ENCODE measurements at regions of chr16 and their contacts with region 1.

Region 1: DNA sequence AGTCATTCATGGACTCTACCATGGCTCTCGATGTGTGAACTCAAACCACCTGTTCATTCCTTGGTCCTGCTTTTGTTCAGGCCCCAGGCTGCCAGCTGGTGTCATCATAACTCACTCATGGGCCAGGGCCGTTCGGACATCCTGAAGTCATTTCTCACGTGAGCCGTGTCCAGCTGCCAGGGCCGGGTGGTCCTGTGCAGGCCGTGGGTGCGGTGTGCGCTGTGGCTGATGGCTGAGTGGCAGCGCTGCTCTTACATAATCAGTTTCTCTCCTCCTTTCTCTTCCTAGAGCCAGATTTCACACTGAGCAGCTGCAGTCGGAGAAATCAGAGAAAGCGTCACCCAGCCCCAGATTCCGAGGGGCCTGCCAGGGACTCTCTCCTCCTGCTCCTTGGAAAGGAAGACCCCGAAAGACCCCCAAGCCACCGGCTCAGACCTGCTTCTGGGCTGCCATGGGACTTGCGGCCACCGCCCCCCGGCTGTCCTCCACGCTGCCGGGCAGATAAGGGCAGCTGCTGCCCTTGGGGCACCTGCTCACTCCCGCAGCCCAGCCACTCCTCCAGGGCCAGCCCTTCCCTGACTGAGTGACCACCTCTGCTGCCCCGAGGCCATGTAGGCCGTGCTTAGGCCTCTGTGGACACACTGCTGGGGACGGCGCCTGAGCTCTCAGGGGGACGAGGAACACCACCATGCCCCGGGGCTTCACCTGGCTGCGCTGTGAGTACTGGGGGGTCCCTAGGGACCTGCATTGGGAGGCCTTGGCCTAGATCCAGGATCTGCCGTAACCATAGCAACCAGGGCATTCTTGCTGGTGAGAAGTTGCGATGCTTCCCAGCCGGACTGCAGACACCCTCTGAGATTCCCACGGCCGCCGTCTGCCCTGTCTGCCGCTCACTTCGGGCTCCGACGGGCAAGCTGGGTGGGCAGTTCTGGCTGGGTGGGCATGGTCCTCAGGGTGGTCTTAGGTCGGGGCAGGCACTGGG is at the start of gene IL34:
- DNase-seq: no peak
- H3K4me3 ChIP-seq: no peak within 1 kb of the TSS
- H3K27ac ChIP-seq: no peak within 1 kb of the TSS
- H3K4me1 ChIP-seq: no peaks in the 10 kb centered on the region
- H3K27me3 ChIP-seq: no peaks in the 10 kb centered on the region
- CTCF ChIP-seq: no peak
- POLR2A ChIP-seq: no peak
- total RNA-seq, gene IL34: 6.1 TPM

Region 2: DNA sequence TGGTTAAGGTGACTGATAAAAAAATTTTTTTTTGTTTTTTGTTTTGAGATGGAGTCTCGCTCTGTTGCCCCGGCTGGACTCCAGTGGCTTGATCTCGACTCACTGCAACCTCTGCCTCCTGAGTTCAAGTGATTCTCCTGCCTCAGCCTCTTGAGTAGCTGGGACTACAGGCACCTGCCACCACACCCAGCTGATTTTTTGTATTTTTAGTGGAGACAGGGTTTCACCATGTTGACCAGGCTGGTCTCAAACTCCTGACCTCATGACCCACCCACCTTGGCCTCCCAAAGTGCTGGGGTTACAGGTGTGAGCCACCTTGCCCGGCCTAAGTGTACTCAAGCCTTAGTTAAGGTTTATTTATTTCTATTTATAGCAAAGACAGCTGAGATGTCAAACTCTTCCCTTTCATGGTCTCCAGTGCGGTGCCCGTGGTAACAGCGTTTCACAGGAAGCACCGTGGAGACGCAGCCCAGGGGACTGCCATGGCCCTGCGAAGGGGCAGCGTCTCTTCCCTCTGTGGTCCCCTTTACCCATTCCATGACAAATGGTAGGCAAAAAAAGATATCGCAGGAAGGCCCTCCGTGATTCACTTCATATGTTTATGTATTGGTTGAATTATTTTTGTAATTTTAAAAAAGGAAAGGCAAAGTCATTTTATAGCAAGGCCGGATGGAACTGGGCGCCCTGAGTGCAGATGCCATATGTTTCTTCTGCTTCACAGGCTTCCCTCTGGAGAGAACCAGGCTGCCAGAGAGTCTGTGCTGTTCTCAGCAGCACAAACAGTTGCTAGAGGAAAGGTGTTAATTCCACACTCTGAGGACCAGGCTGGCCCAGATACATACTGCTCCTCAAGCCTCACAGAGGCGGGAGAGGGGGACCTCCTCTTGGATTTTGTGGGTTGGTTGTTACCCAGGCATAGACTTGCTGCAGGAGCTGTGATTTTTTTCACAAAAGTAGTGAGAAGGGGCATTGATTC is 270.6 kb before region 1 on chr16:
- intact Hi-C with region 1: loop called (anchors 10 kb)
- DNase-seq: no peak
- H3K4me3 ChIP-seq: no peak overlapping the region
- H3K27ac ChIP-seq: no peak overlapping the region
- H3K4me1 ChIP-seq: peaks cover 16% of the 10 kb centered on the region
- H3K27me3 ChIP-seq: no peaks in the 10 kb centered on the region
- CTCF ChIP-seq: no peak
- POLR2A ChIP-seq: no peak

Region 3: GRCh38 chr16:70610273-70611223 is 36.0 kb before region 1 on chr16:
- intact Hi-C with region 1: no loop called
- DNase-seq: no peak
- H3K4me3 ChIP-seq: no peak overlapping the region
- H3K27ac ChIP-seq: no peak overlapping the region
- H3K4me1 ChIP-seq: peaks cover 5% of the 10 kb centered on the region
- H3K27me3 ChIP-seq: no peaks in the 10 kb centered on the region
- CTCF ChIP-seq: no peak
- POLR2A ChIP-seq: no peak